Activated naive CD4-positive, alpha-beta T cell treated with anti-CD3 and anti-CD28 coated beads, Interleukin-2, amount 10 ng/mL, durations not matched to agents 7 days and 5 days (primary cell): ENCODE measurements at regions of chr1 and their contacts with region 1.

Region 1: DNA sequence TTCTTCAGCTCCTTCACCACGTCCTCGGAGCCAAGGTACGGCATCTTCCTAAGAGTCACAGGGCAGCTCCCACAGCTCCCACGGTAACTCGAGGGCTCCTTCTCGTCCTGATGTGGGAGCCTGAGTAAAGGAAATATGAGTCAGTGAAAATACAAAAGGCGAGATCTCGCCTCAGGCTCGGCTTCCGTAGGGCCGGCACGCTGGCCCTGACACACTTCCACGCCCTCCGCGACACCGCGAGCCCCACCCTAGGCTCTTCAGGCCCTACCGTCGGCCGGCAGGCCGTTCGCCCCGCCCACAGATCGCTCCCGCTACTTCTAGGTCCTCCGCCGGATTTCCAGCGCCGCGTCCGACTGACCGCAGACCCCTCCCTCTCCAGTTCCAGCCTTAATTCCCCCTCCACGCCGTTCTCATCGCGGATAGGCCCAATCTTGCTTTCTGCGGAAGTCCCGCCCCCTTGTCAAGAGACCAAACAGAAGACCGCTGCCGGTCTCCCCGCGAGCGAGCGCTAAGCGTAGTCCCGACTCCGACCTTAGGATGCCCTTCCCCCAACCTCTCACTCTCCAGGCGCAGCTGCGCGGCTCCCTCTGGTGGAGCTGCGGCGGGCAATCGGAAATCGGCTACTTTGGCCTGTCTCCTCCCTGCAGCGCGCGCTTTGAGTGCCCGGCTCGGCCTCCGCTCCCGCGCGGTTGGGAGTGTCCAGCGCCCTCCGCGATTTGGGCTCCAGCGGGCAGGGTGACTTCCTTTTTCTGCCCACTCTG is at the starts of genes AP4B1 and DCLRE1B:
- DNase-seq: peak; percentile 99
- H3K4me3 Mint-ChIP-seq: peak within 1 kb of the TSS; percentile 86
- H3K27ac Mint-ChIP-seq: peak within 1 kb of the TSS; percentile 96
- H3K4me1 Mint-ChIP-seq: peaks cover 64% of the 10 kb centered on the region
- H3K27me3 Mint-ChIP-seq: no peaks in the 10 kb centered on the region

Region 2: DNA sequence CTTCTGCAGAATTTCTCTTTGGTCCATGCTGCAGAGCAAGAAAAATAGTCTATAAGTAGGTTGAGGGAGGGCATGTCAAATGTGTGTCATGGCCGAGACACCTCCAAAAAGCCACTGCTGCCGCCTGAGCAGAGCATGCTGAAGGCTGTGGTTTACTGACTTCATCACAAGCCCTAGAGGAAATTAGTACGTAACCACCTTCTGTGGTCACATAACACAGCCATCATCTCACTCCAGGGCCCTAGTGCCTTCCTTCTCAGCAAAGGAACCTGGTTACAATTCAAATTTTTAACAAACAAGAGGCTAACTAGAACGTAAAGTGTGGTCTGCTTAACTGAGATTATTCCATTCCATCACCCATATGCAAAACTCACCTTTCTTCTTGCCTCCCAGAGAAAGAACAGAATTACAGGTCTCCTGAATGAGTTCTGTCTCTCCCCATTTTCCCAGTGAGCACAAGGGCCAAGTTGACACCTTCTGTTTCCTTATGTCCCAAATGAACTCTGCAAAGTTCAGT is 33.2 kb before region 1 on chr1 and contains the start of gene PTPN22:
- CTCF ChIA-PET with region 1: interaction called, 22 read pairs
- DNase-seq: peak; percentile 88
- H3K4me3 Mint-ChIP-seq: peak within 1 kb of the TSS; percentile 87
- H3K27ac Mint-ChIP-seq: peak within 1 kb of the TSS; percentile 95
- H3K4me1 Mint-ChIP-seq: peaks cover 80% of the 10 kb centered on the region
- H3K27me3 Mint-ChIP-seq: no peaks in the 10 kb centered on the region

Region 3: GRCh38 chr1:113881661-113882060 is 23.2 kb before region 1 on chr1:
- CTCF ChIA-PET with region 1: interaction called, 12 read pairs
- DNase-seq: no peak
- H3K4me3 Mint-ChIP-seq: no peak overlapping the region
- H3K27ac Mint-ChIP-seq: no peak overlapping the region
- H3K4me1 Mint-ChIP-seq: peaks cover 47% of the 10 kb centered on the region
- H3K27me3 Mint-ChIP-seq: no peaks in the 10 kb centered on the region

Region 4: GRCh38 chr1:114428083-114428749 is 523.4 kb after region 1 on chr1:
- CTCF ChIA-PET with region 1: no interaction called
- DNase-seq: peak; percentile 26
- H3K4me3 Mint-ChIP-seq: no peak overlapping the region
- H3K27ac Mint-ChIP-seq: peak overlapping the region; percentile 69
- H3K4me1 Mint-ChIP-seq: peaks cover 8% of the 10 kb centered on the region
- H3K27me3 Mint-ChIP-seq: no peaks in the 10 kb centered on the region